ENCODE measurements at regions of chr12 and their contacts with region 1.

Region 1: DNA sequence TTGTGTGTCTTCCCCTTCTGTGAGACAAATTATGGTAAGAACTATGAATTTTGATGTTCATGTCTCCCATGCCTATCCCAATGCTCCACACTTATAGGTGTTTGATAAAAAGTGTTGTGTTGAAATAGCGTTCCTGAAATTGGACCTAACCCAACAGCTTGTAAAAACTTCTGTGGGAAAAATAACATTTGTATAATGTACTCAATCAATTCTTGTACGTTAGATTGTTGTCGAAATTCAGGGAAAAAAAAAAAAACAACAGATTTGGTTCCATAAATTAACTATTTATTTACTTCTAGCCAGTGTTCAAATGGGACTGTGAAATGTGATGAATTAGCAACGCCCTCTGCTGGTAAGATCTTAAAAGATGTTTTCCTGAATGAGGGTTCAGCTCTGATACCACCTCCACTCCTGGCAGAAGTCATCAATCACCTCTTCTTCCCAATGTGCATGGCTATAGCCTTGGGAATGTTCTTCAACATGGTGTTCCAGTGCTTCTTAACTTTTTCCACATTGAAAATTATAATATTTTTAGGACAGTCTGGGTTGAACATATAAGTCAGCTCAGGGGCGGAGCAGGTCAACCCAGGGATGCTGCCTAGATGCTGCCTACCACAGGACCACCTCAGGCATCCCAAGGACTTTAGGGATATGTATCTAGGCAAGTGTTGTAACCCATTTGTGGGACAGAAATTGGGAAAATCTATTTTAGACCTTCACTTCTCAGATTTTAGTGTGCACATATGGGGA is 170.6 kb downstream of the OTOGL start:
- DNase-seq: peak; percentile 69
- H3K4me3 ChIP-seq: no peak overlapping the region
- H3K27ac ChIP-seq: peak overlapping the region; percentile 81
- H3K4me1 ChIP-seq: peaks cover 18% of the 10 kb centered on the region
- H3K27me3 ChIP-seq: no peaks in the 10 kb centered on the region
- CTCF ChIP-seq: peak; percentile 46 to 47
- POLR2A ChIP-seq: no peak

Region 2: GRCh38 chr12:79547735-79548609 is 722.0 kb before region 1 on chr12:
- CTCF ChIA-PET with region 1: interaction called, 3 read pairs
- POLR2A ChIA-PET with region 1: no interaction called
- dilution Hi-C with region 1: no loop called
- intact Hi-C with region 1: loop called (anchors 2 kb)
- DNase-seq: peak; percentile 95
- H3K4me3 ChIP-seq: peak overlapping the region in 1 of 3 experiments; percentile 37
- H3K27ac ChIP-seq: peak overlapping the region; percentile 99
- H3K4me1 ChIP-seq: peaks cover 55% of the 10 kb centered on the region
- H3K27me3 ChIP-seq: no peaks in the 10 kb centered on the region
- CTCF ChIP-seq: peak; percentile 58 to 74
- POLR2A ChIP-seq: peak; percentile 69

Region 3: GRCh38 chr12:79935021-79935623 is 334.9 kb before region 1 on chr12 and contains the start of gene PPP1R12A:
- CTCF ChIA-PET with region 1: interaction called, 3 read pairs
- POLR2A ChIA-PET with region 1: no interaction called
- dilution Hi-C with region 1: no loop called
- intact Hi-C with region 1: loop called (anchors 1 kb)
- DNase-seq: peak; percentile 99
- H3K4me3 ChIP-seq: peak within 1 kb of the TSS; percentile 69 to 97 (median 84)
- H3K27ac ChIP-seq: peak within 1 kb of the TSS; percentile 82
- H3K4me1 ChIP-seq: peaks cover 22% of the 10 kb centered on the region
- H3K27me3 ChIP-seq: no peaks in the 10 kb centered on the region
- CTCF ChIP-seq: peak in 1 of 2 donors; percentile 14
- POLR2A ChIP-seq: peak; percentile 92
- total RNA-seq, gene PPP1R12A: 83.9 and 86.8 TPM in 2 replicates

Region 4: DNA sequence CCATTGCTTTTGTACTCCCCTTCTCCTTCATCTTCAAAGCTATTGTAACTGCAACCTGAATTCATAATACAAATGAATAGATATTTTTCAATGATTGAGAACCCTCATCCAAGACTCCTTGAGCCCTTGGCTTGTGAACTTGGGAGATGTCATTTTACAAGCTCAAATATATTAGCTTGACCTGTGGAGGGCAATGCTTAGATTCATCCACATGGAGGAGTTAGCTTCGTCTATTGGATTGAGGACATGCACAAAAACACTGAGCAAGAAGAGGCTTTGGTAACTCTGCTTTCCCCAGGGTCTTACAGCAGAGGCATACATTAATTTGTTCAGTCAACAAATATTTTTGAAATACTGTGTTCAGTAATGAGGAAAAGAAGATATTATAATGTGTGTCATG is 69.6 kb before region 1 on chr12:
- CTCF ChIA-PET with region 1: interaction called, 641 read pairs
- POLR2A ChIA-PET with region 1: interaction called, 3 read pairs
- dilution Hi-C with region 1: no loop called
- intact Hi-C with region 1: loop called (anchors 1 kb)
- DNase-seq: no peak
- H3K4me3 ChIP-seq: no peak overlapping the region
- H3K27ac ChIP-seq: no peak overlapping the region
- H3K4me1 ChIP-seq: no peaks in the 10 kb centered on the region
- H3K27me3 ChIP-seq: no peaks in the 10 kb centered on the region
- CTCF ChIP-seq: no peak
- POLR2A ChIP-seq: no peak

Region 5: DNA sequence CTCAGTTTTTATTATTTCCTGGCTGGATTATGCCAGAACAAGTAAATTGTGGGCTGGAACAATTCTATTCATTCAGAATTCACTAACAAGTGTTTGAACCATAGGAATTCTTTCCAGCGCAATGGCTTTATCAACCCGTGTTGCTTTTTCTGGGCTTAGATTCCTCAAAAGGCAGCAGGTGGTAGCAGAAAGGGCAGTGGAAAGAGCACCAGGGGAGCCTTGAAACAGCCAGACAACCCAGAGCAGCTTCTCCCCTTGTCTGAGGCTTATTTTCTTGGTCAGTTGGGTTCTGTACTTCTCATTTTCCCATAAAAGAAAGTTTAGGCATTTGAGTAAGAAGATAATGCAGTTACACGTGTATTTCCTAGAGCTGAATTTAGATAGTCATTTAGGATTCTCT is 39.9 kb before region 1 on chr12:
- CTCF ChIA-PET with region 1: interaction called, 9 read pairs
- POLR2A ChIA-PET with region 1: no interaction called
- dilution Hi-C with region 1: no loop called
- intact Hi-C with region 1: loop called (anchors 1 kb)
- DNase-seq: peak; percentile 61
- H3K4me3 ChIP-seq: no peak overlapping the region
- H3K27ac ChIP-seq: no peak overlapping the region
- H3K4me1 ChIP-seq: peaks cover 25% of the 10 kb centered on the region
- H3K27me3 ChIP-seq: no peaks in the 10 kb centered on the region
- CTCF ChIP-seq: no peak
- POLR2A ChIP-seq: no peak

Region 6: DNA sequence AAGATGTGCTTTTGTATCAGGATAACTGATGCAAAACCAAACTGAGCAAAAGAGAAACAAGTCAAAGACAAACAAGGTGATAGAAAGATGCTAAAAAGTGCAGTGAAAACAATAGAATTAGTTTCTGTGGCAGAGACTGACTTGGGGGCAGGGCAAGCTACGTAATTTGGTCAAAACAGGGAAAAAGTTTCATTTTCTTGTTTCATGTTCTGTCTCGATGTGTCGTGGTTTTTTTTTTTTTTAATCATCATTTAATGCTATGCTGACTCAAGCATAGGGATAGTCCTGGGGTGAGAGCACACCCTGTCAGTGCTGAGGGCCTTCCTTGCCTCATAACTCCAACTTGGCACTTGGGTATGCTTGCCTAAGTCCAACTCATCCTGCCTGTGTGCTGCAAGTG is 30.0 kb after region 1 on chr12:
- CTCF ChIA-PET with region 1: no interaction called
- POLR2A ChIA-PET with region 1: no interaction called
- dilution Hi-C with region 1: no loop called
- intact Hi-C with region 1: no loop called
- DNase-seq: no peak
- H3K4me3 ChIP-seq: no peak overlapping the region
- H3K27ac ChIP-seq: no peak overlapping the region
- H3K4me1 ChIP-seq: no peaks in the 10 kb centered on the region
- H3K27me3 ChIP-seq: no peaks in the 10 kb centered on the region
- CTCF ChIP-seq: no peak
- POLR2A ChIP-seq: no peak

Region 7: DNA sequence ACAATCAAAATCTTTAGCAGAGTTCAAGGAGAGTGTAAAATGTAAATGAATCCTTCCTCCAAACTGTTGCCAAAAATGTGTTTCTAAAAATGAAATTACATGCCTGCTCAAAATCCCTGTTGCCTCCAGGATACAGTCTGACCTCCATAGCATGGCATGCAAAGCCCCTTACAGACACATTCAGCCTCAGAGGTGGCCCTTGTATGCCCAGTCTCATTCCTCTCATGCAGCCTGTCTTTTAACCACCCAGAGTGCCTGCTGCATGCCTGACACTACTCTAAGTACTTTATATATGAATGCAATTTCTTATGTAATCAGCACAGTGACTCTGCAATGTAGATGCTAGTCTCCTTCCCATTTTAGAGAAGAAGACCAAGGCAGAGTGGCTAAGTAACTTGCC is 149.7 kb after region 1 on chr12:
- CTCF ChIA-PET with region 1: no interaction called
- POLR2A ChIA-PET with region 1: no interaction called
- dilution Hi-C with region 1: no loop called
- intact Hi-C with region 1: no loop called
- DNase-seq: no peak
- H3K4me3 ChIP-seq: no peak overlapping the region
- H3K27ac ChIP-seq: no peak overlapping the region
- H3K4me1 ChIP-seq: no peaks in the 10 kb centered on the region
- H3K27me3 ChIP-seq: no peaks in the 10 kb centered on the region
- CTCF ChIP-seq: no peak
- POLR2A ChIP-seq: no peak

Region 8: GRCh38 chr12:80763874-80764273 is 493.9 kb after region 1 on chr12:
- CTCF ChIA-PET with region 1: interaction called, 6 read pairs
- POLR2A ChIA-PET with region 1: no interaction called
- dilution Hi-C with region 1: no loop called
- intact Hi-C with region 1: loop called (anchors 2 kb)
- DNase-seq: peak; percentile 73
- H3K4me3 ChIP-seq: no peak overlapping the region
- H3K27ac ChIP-seq: no peak overlapping the region
- H3K4me1 ChIP-seq: no peaks in the 10 kb centered on the region
- H3K27me3 ChIP-seq: no peaks in the 10 kb centered on the region
- CTCF ChIP-seq: peak; percentile 28 to 38
- POLR2A ChIP-seq: no peak